CD8-positive, alpha-beta T cell (primary cell): ENCODE measurements at regions of chr1 and their contacts with region 1.

Region 1: DNA sequence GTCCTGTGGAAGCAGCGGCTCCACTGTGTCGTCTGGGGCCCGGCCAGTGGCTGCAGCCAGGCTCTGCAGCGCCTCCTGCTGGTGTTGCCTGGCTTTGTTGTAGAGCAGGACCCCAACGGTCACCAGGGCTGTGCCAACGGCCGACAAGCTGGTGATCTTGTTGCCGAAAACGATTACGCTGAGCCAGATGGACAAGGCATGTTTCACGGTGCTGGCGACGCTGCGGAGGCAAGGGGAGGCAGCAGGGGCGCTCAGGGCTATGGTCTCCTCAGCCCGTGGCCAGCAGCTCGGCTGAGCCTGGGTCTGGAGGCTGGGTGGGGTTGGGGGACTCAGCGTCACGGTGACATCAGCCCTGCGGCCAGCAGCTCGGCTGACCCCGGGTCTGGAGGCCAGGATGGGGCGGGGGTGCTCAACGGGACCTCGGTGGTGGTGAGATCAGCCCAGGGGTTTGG is 7.0 kb upstream of the CDK11B start:
- DNase-seq: peak in 5 of 9 experiments; percentile 30 to 55 (median 47)
- ATAC-seq: no peak
- H3K4me3 ChIP-seq: no peak overlapping the region
- H3K4me3 Mint-ChIP-seq: no peak overlapping the region
- H3K27ac ChIP-seq: no peak overlapping the region
- H3K27ac Mint-ChIP-seq: no peak overlapping the region
- H3K4me1 ChIP-seq: no peaks in the 10 kb centered on the region
- H3K4me1 Mint-ChIP-seq: peaks cover 3% of the 10 kb centered on the region
- H3K27me3 ChIP-seq: no peaks in the 10 kb centered on the region
- H3K27me3 Mint-ChIP-seq: no peaks in the 10 kb centered on the region
- CTCF ChIP-seq: peak; percentile 30

Region 2: GRCh38 chr1:1144122-1144842 is 521.5 kb before region 1 on chr1:
- CTCF ChIA-PET with region 1: no interaction called
- POLR2A ChIA-PET with region 1: no interaction called
- intact Hi-C with region 1: no loop called
- DNase-seq: peak; percentile 28 to 79 (median 61)
- ATAC-seq: peak; percentile 91
- H3K4me3 ChIP-seq: no peak overlapping the region
- H3K4me3 Mint-ChIP-seq: peak overlapping the region; percentile 42
- H3K27ac ChIP-seq: peak overlapping the region; percentile 62 to 69
- H3K27ac Mint-ChIP-seq: peak overlapping the region; percentile 93
- H3K4me1 ChIP-seq: peaks cover 29% of the 10 kb centered on the region
- H3K4me1 Mint-ChIP-seq: peaks cover 10% of the 10 kb centered on the region
- H3K27me3 ChIP-seq: no peaks in the 10 kb centered on the region
- H3K27me3 Mint-ChIP-seq: no peaks in the 10 kb centered on the region
- CTCF ChIP-seq: no peak

Region 3: GRCh38 chr1:1678581-1679390 is 13.0 kb after region 1 on chr1:
- CTCF ChIA-PET with region 1: interaction called, 12 read pairs
- POLR2A ChIA-PET with region 1: interaction called, 6 read pairs
- intact Hi-C with region 1: no loop called
- DNase-seq: peak in 6 of 9 experiments; percentile 34 to 70 (median 54)
- ATAC-seq: peak; percentile 58
- H3K4me3 ChIP-seq: peak overlapping the region in 1 of 2 experiments; percentile 49
- H3K4me3 Mint-ChIP-seq: peak overlapping the region; percentile 87
- H3K27ac ChIP-seq: peak overlapping the region; percentile 53 to 85
- H3K27ac Mint-ChIP-seq: peak overlapping the region; percentile 97
- H3K4me1 ChIP-seq: peaks cover 15% of the 10 kb centered on the region
- H3K4me1 Mint-ChIP-seq: peaks cover 31% of the 10 kb centered on the region
- H3K27me3 ChIP-seq: no peaks in the 10 kb centered on the region
- H3K27me3 Mint-ChIP-seq: no peaks in the 10 kb centered on the region
- CTCF ChIP-seq: peak; percentile 57

Region 4: GRCh38 chr1:1730870-1731269 is 65.0 kb after region 1 on chr1:
- CTCF ChIA-PET with region 1: interaction called, 4 read pairs
- POLR2A ChIA-PET with region 1: interaction called, 4 read pairs
- intact Hi-C with region 1: loop called in 1 of 2 experiments (anchors 5 kb)
- DNase-seq: no peak
- ATAC-seq: no peak
- H3K4me3 ChIP-seq: no peak overlapping the region
- H3K4me3 Mint-ChIP-seq: no peak overlapping the region
- H3K27ac ChIP-seq: no peak overlapping the region
- H3K27ac Mint-ChIP-seq: no peak overlapping the region
- H3K4me1 ChIP-seq: peaks cover 8% of the 10 kb centered on the region
- H3K4me1 Mint-ChIP-seq: peaks cover 14% of the 10 kb centered on the region
- H3K27me3 ChIP-seq: no peaks in the 10 kb centered on the region
- H3K27me3 Mint-ChIP-seq: no peaks in the 10 kb centered on the region
- CTCF ChIP-seq: no peak